K562 (cell line): ENCODE measurements at regions of chr17 and their contacts with region 1.

Region 1: GRCh38 chr17:21043286-21044232 is 748 bp upstream of the USP22 start:
- DNase-seq: peak in 3 of 4 experiments; percentile 80 to 96 (median 82)
- ATAC-seq: peak; percentile 92
- H3K4me3 ChIP-seq: peak overlapping the region; percentile 56
- H3K27ac ChIP-seq: peak overlapping the region; percentile 95
- H3K4me1 ChIP-seq: peaks cover 12 to 26% of the 10 kb centered on the region in 2 experiments; a peak in 4 of 5 replicates
- H3K27me3 ChIP-seq: no peaks in the 10 kb centered on the region
- CTCF ChIP-seq: peak; percentile 57 to 81 (median 76)
- EP300 ChIP-seq: no peak; the same call in 1 of the 2 replicates
- POLR2A ChIP-seq: peak; percentile 87
- RAD21 ChIP-seq: peak; percentile 39 to 42

Region 2: GRCh38 chr17:21058098-21058893 is 14.7 kb after region 1 on chr17:
- CTCF ChIA-PET with region 1: no interaction called
- POLR2A ChIA-PET with region 1: interaction called, 24 read pairs
- in situ Hi-C with region 1: no loop called
- intact Hi-C with region 1: no loop called
- DNase-seq: no peak
- ATAC-seq: peak; percentile 54; the same call in 2 of the 3 replicates
- H3K4me3 ChIP-seq: no peak overlapping the region
- H3K27ac ChIP-seq: no peak overlapping the region
- H3K4me1 ChIP-seq: peaks cover 0 to 11% of the 10 kb centered on the region in 2 experiments; a peak in 3 of 5 replicates
- H3K27me3 ChIP-seq: peaks cover 0 to 25% of the 10 kb centered on the region in 2 experiments; a peak in 2 of 5 replicates
- CTCF ChIP-seq: peak in 2 of 3 experiments; percentile 13 to 16; a peak in 1 of 6 replicates
- EP300 ChIP-seq: no peak
- POLR2A ChIP-seq: no peak
- RAD21 ChIP-seq: no peak

Region 3: DNA sequence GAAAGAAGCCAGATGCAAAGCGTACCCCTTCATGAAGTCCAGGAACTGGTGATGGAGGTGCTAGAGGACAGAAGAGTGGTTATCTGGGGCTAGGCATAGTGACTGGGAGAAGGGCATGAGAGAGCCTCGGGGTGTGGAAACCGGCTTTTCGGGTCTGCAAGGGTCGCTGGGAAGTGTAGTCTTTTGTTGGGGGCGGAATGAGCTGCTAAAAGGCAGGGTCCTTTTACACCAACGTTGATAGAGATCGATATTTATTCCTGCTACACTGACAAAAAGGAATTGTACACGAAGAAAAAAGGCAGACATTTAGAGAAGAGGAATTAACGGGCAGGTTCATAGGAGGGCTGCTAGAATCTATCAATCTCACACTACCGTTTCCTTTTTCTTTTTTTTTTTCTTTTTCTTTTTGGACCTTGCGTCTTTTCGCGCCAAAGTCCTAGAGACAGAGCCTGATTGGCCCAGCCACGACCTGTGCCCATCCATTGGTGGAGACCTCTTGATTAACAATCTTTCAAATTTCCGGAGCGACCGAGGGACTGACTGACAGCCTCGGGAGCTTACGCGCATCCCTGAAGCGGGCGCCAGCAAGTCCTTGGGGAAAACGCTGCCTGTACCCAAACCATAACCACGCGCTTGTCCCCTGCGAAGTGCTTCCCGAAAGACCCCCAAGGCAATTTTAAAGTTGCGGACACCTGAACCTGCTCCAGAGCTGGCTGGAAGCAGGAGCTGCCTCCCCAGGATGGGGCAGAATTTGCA is 55.6 kb after region 1 on chr17:
- CTCF ChIA-PET with region 1: interaction called, 9 read pairs
- POLR2A ChIA-PET with region 1: interaction called, 5 read pairs
- in situ Hi-C with region 1: no loop called
- intact Hi-C with region 1: loop called (anchors 1 kb)
- DNase-seq: peak; percentile 90 to 91 (median 91)
- ATAC-seq: peak; percentile 99
- H3K4me3 ChIP-seq: peak overlapping the region; percentile 79
- H3K27ac ChIP-seq: peak overlapping the region; percentile 99
- H3K4me1 ChIP-seq: no peaks in the 10 kb centered on the region; a peak in 2 of 5 replicates
- H3K27me3 ChIP-seq: no peaks in the 10 kb centered on the region
- CTCF ChIP-seq: no peak
- EP300 ChIP-seq: no peak
- POLR2A ChIP-seq: peak; percentile 60
- RAD21 ChIP-seq: no peak

Region 4: GRCh38 chr17:21742326-21742725 is 698.8 kb after region 1 on chr17:
- CTCF ChIA-PET with region 1: no interaction called
- POLR2A ChIA-PET with region 1: no interaction called
- in situ Hi-C with region 1: no loop called
- intact Hi-C with region 1: no loop called
- DNase-seq: peak in 3 of 4 experiments; percentile 5 to 11 (median 7)
- ATAC-seq: peak; percentile 34; the same call in 1 of the 3 replicates
- H3K4me3 ChIP-seq: no peak overlapping the region
- H3K27ac ChIP-seq: no peak overlapping the region
- H3K4me1 ChIP-seq: no peaks in the 10 kb centered on the region
- H3K27me3 ChIP-seq: no peaks in the 10 kb centered on the region
- CTCF ChIP-seq: no peak
- EP300 ChIP-seq: no peak
- POLR2A ChIP-seq: no peak
- RAD21 ChIP-seq: no peak